ENCODE measurements at regions of chr1 and their contacts with region 1.

Region 1: GRCh38 chr1:145845514-145846161 is at the start of gene NUDT17:
- DNase-seq: peak; percentile 48 to 67
- H3K4me3 ChIP-seq: peak within 1 kb of the TSS; percentile 63
- H3K27ac ChIP-seq: no peak within 1 kb of the TSS
- H3K4me1 ChIP-seq: peaks cover 3% of the 10 kb centered on the region; the same call in 1 of the 2 replicates
- H3K27me3 ChIP-seq: no peaks in the 10 kb centered on the region
- CTCF ChIP-seq: peak; percentile 92
- total RNA-seq, gene NUDT17: 1.0 and 1.5 TPM in 2 replicates

Region 2: DNA sequence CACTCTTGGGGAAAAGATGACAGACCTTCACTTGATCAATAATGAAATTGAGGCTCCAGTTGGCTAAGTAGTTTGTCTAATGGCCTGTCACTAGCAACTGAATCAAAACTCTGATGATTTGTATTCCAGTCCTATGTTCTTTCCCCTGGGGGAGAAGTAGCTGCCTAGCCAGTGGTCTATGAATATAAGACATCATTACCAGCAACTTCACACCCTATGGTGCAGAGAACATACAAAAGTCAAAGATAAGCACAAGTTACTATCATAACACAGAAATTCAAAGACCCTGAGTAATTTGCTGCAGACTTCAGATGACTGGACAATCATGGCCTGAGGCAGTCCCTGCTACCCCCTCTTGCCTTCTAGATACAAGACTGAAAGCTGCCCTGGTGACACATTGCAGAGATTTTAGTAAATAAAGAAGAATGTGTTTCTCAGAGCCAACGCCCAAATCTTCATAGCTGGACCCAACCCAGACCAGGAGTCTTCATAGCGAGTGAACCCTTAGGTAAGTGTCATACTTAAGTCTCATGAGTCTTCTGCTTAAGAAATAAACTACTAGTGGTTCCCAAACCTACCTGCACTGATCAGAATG is 139.5 kb before region 1 on chr1:
- CTCF ChIA-PET with region 1: no interaction called
- POLR2A ChIA-PET with region 1: no interaction called
- intact Hi-C with region 1: no loop called
- DNase-seq: peak; percentile 83 to 99
- H3K4me3 ChIP-seq: no peak overlapping the region
- H3K27ac ChIP-seq: peak overlapping the region; percentile 68
- H3K4me1 ChIP-seq: peaks cover 39% of the 10 kb centered on the region
- H3K27me3 ChIP-seq: no peaks in the 10 kb centered on the region
- CTCF ChIP-seq: no peak

Region 3: DNA sequence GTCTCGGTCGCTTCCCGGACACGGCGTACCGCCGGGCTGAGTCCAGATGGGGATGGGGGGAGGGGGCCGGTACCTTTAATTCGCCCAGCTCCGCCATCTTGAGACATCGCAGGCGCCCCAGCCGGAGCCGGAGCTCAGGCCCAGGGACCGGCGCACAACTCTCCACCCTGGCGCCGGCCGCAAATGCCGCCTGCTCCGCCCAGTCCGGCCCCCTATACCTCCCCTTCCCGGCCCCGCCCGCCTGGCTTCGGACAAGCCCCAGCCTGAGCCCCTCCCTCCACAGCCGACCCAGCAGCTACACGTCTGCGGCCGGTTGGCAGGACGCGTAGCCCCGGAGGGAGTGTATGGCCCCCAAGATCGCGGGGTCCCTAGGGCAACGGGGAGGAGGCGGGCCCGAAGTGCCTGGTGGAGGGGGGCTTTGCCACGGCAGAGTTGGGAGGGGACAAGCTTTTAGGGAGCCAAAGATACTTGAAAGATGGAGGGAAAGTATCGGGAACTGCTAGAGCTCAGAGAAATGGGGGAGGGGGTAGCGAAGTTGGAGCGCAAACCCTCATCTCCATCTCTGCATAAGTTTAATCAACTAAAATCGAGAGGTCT is 13.4 kb after region 1 on chr1 and contains the start of gene PIAS3:
- CTCF ChIA-PET with region 1: interaction called, 15 read pairs
- POLR2A ChIA-PET with region 1: interaction called, 4 read pairs
- intact Hi-C with region 1: no loop called
- DNase-seq: peak; percentile 81 to 95
- H3K4me3 ChIP-seq: peak within 1 kb of the TSS; percentile 93
- H3K27ac ChIP-seq: peak within 1 kb of the TSS; percentile 23; the same call in 1 of the 2 replicates
- H3K4me1 ChIP-seq: peaks cover 8% of the 10 kb centered on the region
- H3K27me3 ChIP-seq: no peaks in the 10 kb centered on the region
- CTCF ChIP-seq: no peak
- total RNA-seq, gene PIAS3: 44.3 and 57.8 TPM in 2 replicates

Region 4: GRCh38 chr1:145906954-145907753 is 61.5 kb after region 1 on chr1:
- CTCF ChIA-PET with region 1: interaction called, 4 read pairs
- POLR2A ChIA-PET with region 1: no interaction called
- intact Hi-C with region 1: loop called (anchors 2 kb)
- DNase-seq: no peak
- H3K4me3 ChIP-seq: no peak overlapping the region
- H3K27ac ChIP-seq: no peak overlapping the region
- H3K4me1 ChIP-seq: 0 out of 2 replicates have a peak, but pooled peaks cover 3% of the 10 kb centered on the region
- H3K27me3 ChIP-seq: no peaks in the 10 kb centered on the region
- CTCF ChIP-seq: no peak

Region 5: DNA sequence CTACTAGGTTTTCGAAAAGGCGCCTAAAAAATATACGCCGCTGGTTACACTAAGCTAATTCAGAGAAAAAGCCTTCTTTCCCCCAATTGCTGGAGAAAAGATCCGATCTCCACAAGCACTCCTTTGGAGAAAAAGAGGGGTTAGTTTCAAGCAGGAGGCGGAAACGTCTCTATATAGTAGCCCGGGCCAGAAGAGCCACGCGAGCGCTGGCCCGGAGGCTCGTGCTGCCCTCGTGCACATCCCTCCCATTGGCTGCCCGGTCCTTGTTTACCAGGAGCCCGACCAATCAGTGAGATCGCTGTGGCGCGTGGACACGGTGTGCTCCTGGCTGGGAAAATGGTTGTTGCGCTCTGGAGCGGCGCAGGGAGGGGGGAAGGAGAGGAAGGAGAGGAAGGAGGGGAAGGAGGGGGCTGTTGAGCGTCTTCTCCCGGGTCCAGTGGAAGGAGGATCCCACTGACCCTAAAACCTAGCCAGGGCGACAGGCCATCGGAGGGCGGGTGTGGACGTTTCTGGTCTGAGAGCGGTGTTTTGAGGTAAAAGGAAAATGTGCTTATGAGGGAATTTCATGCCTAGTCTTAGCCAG is 150.9 kb after region 1 on chr1 and contains the start of gene TXNIP:
- CTCF ChIA-PET with region 1: no interaction called
- POLR2A ChIA-PET with region 1: no interaction called
- intact Hi-C with region 1: no loop called
- DNase-seq: peak; percentile 93
- H3K4me3 ChIP-seq: peak within 1 kb of the TSS; percentile 93
- H3K27ac ChIP-seq: peak within 1 kb of the TSS; percentile 78
- H3K4me1 ChIP-seq: peaks cover 67% of the 10 kb centered on the region
- H3K27me3 ChIP-seq: no peaks in the 10 kb centered on the region
- CTCF ChIP-seq: no peak
- total RNA-seq, gene TXNIP: 95.7 and 131 TPM in 2 replicates

Region 6: GRCh38 chr1:146012737-146013403 is 167.2 kb after region 1 on chr1:
- CTCF ChIA-PET with region 1: no interaction called
- POLR2A ChIA-PET with region 1: no interaction called
- intact Hi-C with region 1: loop called (anchors 5 kb)
- DNase-seq: peak; percentile 43 to 80
- H3K4me3 ChIP-seq: no peak overlapping the region
- H3K27ac ChIP-seq: no peak overlapping the region
- H3K4me1 ChIP-seq: no peaks in the 10 kb centered on the region; the same call in 1 of the 2 replicates
- H3K27me3 ChIP-seq: no peaks in the 10 kb centered on the region
- CTCF ChIP-seq: peak; percentile 82